Activated CD4-positive, alpha-beta T cell treated with anti-CD3 and anti-CD28 coated beads, Interleukin-2, amount 10 ng/mL, durations not matched to agents 24 days and 14 days (primary cell): ENCODE measurements at regions of chr5 and their contacts with region 1.

Region 1: GRCh38 chr5:31581498-31582099 is 49.5 kb downstream of the C5orf22 start:
- DNase-seq: no peak
- H3K4me3 Mint-ChIP-seq: no peak overlapping the region
- H3K27ac Mint-ChIP-seq: no peak overlapping the region
- H3K4me1 Mint-ChIP-seq: no peaks in the 10 kb centered on the region
- H3K27me3 Mint-ChIP-seq: peaks cover 15% of the 10 kb centered on the region

Region 2: GRCh38 chr5:32076699-32077695 is 495.4 kb after region 1 on chr5:
- intact Hi-C with region 1: loop called (anchors 2 kb)
- DNase-seq: peak; percentile 81
- H3K4me3 Mint-ChIP-seq: no peak overlapping the region
- H3K27ac Mint-ChIP-seq: no peak overlapping the region
- H3K4me1 Mint-ChIP-seq: no peaks in the 10 kb centered on the region
- H3K27me3 Mint-ChIP-seq: no peaks in the 10 kb centered on the region

Region 3: DNA sequence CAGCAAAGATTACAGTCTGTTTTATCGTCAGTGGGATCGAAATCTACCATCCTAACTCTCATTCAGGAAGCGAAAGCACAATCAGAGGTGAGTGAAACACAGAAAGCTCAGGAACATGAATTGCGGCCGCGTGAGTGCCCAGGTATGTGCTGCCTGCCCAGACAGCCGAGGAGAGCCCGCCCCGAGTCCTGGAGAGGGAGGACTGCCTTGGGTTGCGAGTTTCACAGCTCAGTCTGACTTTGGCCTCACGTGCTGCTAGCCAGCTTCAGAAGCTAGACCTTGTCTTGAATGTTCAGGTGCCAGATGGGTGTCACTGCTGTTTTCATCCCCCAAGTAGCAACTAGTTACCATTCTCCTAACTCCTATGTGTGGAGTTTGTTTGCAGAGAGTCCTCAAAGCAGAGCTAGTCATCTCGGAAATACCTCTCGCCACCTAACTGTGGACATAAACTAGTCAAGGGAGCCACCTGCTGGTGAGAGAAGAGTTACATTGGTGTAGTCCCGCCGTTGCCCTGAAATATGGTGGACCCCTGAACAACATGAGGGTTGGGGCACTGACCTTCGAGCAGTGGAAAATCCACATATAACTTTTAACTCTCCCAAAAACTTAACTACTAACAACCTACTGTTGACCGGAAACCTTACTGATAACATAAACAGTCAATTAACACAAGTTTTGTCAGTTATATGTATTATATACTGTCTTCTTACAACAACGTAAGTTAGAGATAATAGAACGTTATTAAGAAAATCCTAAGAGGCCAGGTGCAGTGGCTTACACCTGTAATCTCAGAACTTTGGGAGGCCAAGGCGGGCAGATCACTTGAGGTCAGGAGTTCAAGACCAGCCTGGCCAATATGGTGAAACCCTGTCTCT is 511.6 kb after region 1 on chr5:
- intact Hi-C with region 1: loop called (anchors 2 kb)
- DNase-seq: peak; percentile 89
- H3K4me3 Mint-ChIP-seq: no peak overlapping the region
- H3K27ac Mint-ChIP-seq: no peak overlapping the region
- H3K4me1 Mint-ChIP-seq: peaks cover 3% of the 10 kb centered on the region
- H3K27me3 Mint-ChIP-seq: no peaks in the 10 kb centered on the region